ENCODE measurements at regions of chrX and their contacts with region 1.

Region 1: DNA sequence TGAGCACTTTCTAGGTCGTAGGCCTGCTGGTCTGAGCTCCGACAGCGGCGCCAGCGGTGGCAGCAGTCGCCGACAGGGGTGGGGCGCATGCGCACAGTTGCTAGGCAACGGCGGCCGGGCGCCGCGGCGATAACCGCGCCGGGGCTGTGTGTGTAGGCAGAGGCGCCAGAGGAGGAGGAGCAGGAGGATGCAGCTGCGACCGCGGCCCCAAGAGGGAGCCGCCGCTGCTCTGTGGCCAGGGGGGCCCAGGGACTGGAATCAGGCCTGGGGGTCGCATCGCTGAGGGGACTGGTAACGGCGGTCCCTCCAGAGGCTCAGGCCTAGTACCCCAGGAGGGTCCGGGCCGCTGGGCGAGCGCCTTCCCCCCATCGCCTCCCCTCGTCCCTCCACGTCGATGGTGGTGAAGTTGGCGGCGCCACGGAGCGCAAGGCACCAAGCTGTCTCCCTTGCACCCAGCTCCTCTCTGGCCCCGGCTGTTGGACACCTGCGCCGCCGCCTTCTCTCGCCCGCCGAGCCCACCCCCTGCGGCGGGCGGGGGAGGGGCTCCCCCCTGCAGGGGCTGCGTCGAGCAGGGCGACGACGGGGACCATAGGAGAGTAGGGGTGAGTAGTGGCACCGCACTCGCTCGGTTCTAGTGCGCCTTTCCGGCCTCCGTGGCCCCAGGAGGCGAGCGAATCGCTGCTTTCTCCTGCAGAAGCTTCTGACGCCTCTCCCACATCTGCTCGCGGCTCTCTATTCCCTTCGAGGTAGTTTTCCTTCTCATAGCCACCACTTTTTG is 58.6 kb upstream of the ZC4H2 start:
- DNase-seq: peak; percentile 68
- ATAC-seq: peak; percentile 96
- H3K4me3 ChIP-seq: peak within 1 kb of the TSS; percentile 60
- H3K27ac ChIP-seq: peak within 1 kb of the TSS; percentile 62; the same call in 1 of the 2 replicates
- H3K4me1 ChIP-seq: no peaks in the 10 kb centered on the region
- H3K27me3 ChIP-seq: no peaks in the 10 kb centered on the region
- CTCF ChIP-seq: peak; percentile 40
- POLR2A ChIP-seq: no peak
- RAD21 ChIP-seq: peak; percentile 26

Region 2: DNA sequence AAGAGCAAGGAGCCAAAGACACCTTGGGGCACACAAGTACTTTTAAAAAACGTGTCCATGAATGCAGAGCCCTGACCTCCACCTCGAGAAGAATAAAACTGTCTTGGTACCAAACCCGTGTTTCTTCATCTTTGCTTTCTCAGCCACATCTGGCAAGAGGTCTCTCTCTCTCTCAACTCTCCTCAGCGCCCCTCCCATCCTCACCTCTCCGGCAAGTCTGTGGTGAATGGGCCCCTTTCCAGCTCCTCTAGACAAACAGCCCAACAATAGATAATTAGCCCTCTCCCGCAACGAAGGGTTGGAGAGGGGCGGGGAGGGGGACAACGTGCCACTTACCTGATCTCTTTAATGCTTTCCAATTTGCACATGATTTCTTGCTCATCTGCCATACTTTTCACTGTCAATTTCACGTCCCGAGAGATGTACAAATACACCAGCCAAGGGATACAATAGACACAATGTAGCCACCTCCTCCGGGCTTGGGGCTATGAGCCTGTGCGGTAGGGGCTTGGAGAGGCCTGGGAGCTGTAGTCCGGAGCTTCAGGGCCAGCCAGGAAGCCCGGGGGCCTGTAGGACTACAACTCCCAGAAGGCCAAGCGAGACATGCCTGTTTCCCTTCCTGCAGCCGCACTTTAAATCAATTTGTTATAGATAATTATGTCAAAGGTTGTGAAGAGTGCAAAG is 58.7 kb before region 1 on chrX and contains the start of gene ZC4H2:
- CTCF ChIA-PET with region 1: interaction called, 3 read pairs
- POLR2A ChIA-PET with region 1: no interaction called
- dilution Hi-C with region 1: no loop called
- in situ Hi-C with region 1: no loop called
- intact Hi-C with region 1: loop called (anchors 1 kb)
- DNase-seq: peak; percentile 76
- ATAC-seq: peak; percentile 99
- H3K4me3 ChIP-seq: peak within 1 kb of the TSS; percentile 74
- H3K27ac ChIP-seq: peak within 1 kb of the TSS; percentile 44; the same call in 1 of the 2 replicates
- H3K4me1 ChIP-seq: no peaks in the 10 kb centered on the region
- H3K27me3 ChIP-seq: no peaks in the 10 kb centered on the region
- CTCF ChIP-seq: no peak
- POLR2A ChIP-seq: no peak
- RAD21 ChIP-seq: no peak
- total RNA-seq, gene ZC4H2: 9.2 and 10.6 TPM in 2 replicates

Region 3: GRCh38 chrX:65127842-65128241 is 93.0 kb after region 1 on chrX:
- CTCF ChIA-PET with region 1: no interaction called
- POLR2A ChIA-PET with region 1: no interaction called
- dilution Hi-C with region 1: no loop called
- in situ Hi-C with region 1: no loop called
- intact Hi-C with region 1: no loop called
- DNase-seq: no peak
- ATAC-seq: no peak
- H3K4me3 ChIP-seq: no peak overlapping the region
- H3K27ac ChIP-seq: no peak overlapping the region
- H3K4me1 ChIP-seq: no peaks in the 10 kb centered on the region
- H3K27me3 ChIP-seq: no peaks in the 10 kb centered on the region
- CTCF ChIP-seq: no peak
- POLR2A ChIP-seq: no peak
- RAD21 ChIP-seq: no peak

Region 4: GRCh38 chrX:65528705-65529340 is 494.0 kb after region 1 on chrX:
- CTCF ChIA-PET with region 1: no interaction called
- POLR2A ChIA-PET with region 1: no interaction called
- dilution Hi-C with region 1: no loop called
- in situ Hi-C with region 1: no loop called
- intact Hi-C with region 1: loop called (anchors 2 kb)
- DNase-seq: peak; percentile 10
- ATAC-seq: peak; percentile 87
- H3K4me3 ChIP-seq: no peak overlapping the region
- H3K27ac ChIP-seq: no peak overlapping the region
- H3K4me1 ChIP-seq: peaks cover 3% of the 10 kb centered on the region; the same call in 1 of the 2 replicates
- H3K27me3 ChIP-seq: no peaks in the 10 kb centered on the region
- CTCF ChIP-seq: peak; percentile 80
- POLR2A ChIP-seq: no peak
- RAD21 ChIP-seq: peak; percentile 68